Left colon (tissue), 2 donors: ENCODE measurements at regions of chr16 and their contacts with region 1.

Region 1: DNA sequence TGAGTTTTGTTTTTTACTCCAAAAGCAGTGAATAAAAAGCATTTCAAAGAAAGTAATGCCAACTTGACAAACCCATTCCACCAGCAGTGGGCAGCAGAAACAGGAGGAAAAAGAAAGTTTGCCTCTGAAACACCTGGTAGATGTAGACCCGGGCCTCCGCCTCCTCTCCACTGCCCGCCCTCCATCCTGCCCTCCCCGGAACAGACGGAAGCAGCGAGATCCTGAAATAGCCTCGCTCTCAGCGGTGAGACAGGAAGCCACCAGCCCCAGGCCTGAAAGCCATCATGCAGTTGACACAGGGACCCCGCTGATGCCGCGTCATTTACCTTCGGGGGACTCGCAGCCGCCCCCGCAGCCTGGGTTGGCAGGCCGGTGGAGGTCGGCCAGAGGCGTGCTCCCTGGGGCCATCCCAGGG is 67.8 kb downstream of the C16orf78 start:
- DNase-seq: peak; percentile 64
- ATAC-seq: peak; percentile 50

Region 2: GRCh38 chr16:49382916-49383315 is 58.5 kb before region 1 on chr16:
- intact Hi-C with region 1: no loop called
- DNase-seq: no peak
- ATAC-seq: no peak

Region 3: DNA sequence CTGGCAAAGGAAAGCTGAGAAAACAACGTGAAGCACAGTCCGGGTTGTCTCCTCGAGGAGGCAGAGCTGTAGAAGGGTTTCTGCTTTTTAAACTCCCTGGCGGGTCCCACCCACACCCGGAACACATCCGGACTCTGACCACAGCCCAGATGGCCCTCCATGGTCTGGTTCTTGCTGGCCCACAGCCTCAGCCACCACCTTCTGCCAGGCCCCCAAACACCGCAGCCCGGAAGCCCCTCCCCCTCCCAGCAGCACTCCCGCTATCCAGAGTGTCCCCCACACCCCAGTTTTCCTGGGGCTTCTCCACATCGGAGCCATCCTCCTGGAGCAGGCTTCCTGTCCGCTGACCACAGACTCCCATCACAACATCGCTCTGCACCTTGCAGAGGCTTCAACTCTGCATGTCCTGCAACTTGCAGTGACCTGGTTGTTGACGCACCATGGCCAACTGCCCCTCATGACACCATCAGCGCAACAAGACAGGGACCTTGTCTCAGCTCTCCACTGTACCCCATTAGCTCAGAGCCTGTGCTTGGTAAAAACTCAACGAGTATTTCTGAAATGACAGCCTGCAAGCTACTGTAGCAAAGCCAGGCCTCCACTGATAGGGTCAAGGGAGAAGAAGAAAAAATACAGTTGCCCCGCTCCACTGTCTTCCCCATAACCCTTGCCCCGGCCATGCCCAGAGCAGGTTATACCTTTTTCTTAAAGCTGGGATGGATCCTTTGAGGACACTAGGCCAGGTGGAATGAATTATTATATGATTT is 62.1 kb after region 1 on chr16:
- intact Hi-C with region 1: loop called in 1 of 2 experiments (anchors 10 kb)
- DNase-seq: peak; percentile 15 to 26
- ATAC-seq: no peak

Region 4: DNA sequence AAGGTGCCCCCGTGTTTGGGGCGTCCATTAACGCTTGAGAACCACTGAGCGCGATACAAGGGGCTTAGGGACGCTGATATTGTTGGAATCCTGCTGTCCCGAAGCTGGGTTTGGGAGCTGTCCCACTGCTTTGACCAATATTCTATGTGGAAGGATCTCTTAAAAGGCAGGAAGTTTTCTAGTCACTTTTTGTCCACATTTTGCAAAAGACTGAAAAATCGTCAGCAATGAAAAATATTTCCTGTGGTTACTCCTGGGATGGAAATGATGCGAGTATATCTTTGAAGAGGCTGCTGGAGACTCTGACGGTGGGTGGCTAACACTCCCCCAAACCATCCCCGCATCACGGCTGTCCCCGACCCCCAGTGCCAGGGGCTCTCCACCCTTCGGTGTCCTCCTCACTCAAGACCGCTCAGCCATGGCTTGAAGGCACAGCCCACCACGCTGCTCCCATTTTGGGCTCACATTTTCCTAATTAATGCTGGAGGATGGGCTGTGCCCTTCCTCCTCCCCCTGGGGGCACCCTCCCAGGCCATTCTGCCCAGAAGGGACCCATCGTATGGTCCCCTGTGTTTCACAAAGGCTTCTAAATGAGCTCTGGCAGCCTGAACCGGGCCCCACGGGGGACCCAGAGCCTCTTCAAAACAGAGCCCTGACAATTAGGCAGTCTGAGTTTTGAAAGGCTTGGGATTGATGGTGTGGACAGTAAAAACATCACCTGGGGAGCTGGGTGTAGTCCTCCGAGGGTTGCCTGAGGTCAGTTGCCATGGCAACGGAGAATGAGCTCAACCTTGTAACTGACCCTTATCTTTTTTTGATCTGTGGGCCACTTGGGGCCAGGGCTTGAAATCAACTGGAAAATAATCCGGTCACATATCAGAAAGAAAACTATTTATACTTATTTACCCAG is 90.8 kb after region 1 on chr16:
- intact Hi-C with region 1: no loop called
- DNase-seq: no peak
- ATAC-seq: no peak